AG04450 (cell line): ENCODE measurements at regions of chr4 and their contacts with region 1.

Region 1: GRCh38 chr4:76377911-76378310 is 43.0 kb downstream of the CCDC158 start:
- DNase-seq: no peak
- H3K4me3 ChIP-seq: no peak overlapping the region
- H3K27ac ChIP-seq: no peak overlapping the region
- H3K27me3 ChIP-seq: peaks cover 3% of the 10 kb centered on the region
- CTCF ChIP-seq: peak; percentile 58

Region 2: DNA sequence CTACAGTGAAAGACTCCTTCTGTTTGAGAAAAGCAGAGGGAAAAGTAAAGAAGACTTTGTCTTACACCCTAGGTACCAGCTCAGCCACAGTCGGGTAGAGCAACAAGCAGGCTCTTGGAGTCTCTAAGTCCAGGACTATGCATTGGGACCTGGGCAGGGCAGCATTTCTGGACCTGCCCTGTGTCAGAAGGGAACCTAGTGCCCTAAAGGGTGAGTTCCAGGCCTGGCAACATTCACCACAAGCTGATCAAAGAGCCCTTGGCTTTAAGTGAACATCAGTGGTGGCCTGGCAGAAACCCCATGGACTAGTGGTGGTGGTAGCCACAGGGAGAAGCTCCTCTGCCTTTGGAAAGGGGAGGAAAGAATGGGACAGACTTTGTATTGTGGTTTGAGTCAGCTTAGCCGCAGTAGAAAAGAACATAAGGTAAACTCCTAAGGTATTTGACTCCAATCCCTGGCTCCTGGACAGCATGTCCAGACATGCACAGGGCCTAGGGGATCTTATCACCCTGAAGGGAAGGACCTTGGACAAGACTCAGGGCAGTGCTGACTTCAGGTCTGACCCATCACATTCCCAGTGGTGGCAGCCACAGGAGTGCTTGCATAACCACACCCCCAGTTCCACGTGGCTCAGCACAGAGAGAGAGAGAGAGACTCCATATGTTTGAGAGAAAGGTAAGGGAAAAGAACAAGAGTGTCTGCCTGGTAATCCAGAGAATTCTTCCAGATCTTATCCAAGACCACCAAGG is 10.4 kb after region 1 on chr4:
- CTCF ChIA-PET with region 1: interaction called, 11 read pairs
- POLR2A ChIA-PET with region 1: no interaction called
- DNase-seq: no peak
- H3K4me3 ChIP-seq: no peak overlapping the region
- H3K27ac ChIP-seq: no peak overlapping the region
- H3K27me3 ChIP-seq: peaks cover 4% of the 10 kb centered on the region
- CTCF ChIP-seq: no peak

Region 3: GRCh38 chr4:76476606-76477005 is 98.7 kb after region 1 on chr4:
- CTCF ChIA-PET with region 1: no interaction called
- POLR2A ChIA-PET with region 1: no interaction called
- DNase-seq: no peak
- H3K4me3 ChIP-seq: no peak overlapping the region
- H3K27ac ChIP-seq: no peak overlapping the region
- H3K27me3 ChIP-seq: peaks cover 4% of the 10 kb centered on the region
- CTCF ChIP-seq: no peak

Region 4: DNA sequence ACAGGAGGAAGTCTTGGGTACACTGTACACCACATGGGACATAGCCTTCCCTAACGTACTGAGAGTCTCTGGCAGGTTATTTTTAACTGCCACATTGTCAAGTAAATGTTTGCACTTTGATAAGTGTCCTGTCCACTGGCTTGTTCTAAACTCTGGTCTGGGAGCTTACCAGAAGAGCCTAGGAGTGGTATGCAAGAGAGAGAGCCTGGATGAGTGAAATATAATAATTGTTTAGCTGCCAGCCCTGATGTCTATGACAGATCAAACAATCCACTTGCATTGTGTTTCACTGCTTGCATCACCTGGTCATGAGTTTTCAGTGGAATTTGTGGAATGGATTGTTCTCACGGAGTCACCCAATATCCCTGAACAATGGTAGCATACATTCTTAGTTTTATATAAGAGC is 148.7 kb after region 1 on chr4:
- CTCF ChIA-PET with region 1: no interaction called
- POLR2A ChIA-PET with region 1: no interaction called
- DNase-seq: peak; percentile 13
- H3K4me3 ChIP-seq: no peak overlapping the region
- H3K27ac ChIP-seq: no peak overlapping the region
- H3K27me3 ChIP-seq: no peaks in the 10 kb centered on the region
- CTCF ChIP-seq: no peak

Region 5: DNA sequence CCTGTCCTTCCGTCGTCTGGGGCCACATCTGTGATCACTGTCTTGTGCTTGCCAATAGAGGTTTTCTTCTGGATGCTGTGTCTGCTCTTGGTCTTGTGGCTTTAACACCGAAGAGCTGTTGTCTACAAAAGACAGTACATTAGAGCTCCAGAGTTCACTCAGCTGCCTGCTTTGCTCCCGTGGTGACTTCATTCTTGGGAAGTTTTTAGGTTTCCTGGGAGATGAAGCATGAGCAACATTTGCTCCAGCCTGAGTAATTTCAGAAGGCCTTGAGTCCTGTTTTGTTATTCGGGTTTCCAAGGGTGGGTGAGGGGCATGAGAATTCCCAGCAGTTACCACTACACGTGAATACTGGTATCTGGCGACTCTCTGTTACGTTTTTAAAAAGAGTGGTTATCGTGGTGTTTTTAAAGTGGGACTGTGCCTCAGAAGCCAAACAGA is 246.3 kb after region 1 on chr4:
- CTCF ChIA-PET with region 1: no interaction called
- POLR2A ChIA-PET with region 1: no interaction called
- DNase-seq: peak; percentile 77
- H3K4me3 ChIP-seq: peak overlapping the region; percentile 8; the same call in 1 of the 2 replicates
- H3K27ac ChIP-seq: peak overlapping the region; percentile 77
- H3K27me3 ChIP-seq: no peaks in the 10 kb centered on the region
- CTCF ChIP-seq: no peak

Region 6: GRCh38 chr4:76765473-76766183 is 387.7 kb after region 1 on chr4:
- CTCF ChIA-PET with region 1: no interaction called
- POLR2A ChIA-PET with region 1: no interaction called
- DNase-seq: no peak
- H3K4me3 ChIP-seq: no peak overlapping the region
- H3K27ac ChIP-seq: no peak overlapping the region
- H3K27me3 ChIP-seq: no peaks in the 10 kb centered on the region
- CTCF ChIP-seq: no peak